Motor neuron (in vitro differentiated cells): ENCODE measurements at regions of chr13 and their contacts with region 1.

Region 1: GRCh38 chr13:24220086-24220703 is 59.7 kb downstream of the SPATA13 start:
- ATAC-seq: peak; percentile 65 to 92 (median 79)
- H3K4me3 ChIP-seq: no peak overlapping the region
- H3K27ac ChIP-seq: no peak overlapping the region
- H3K4me1 ChIP-seq: peaks cover 15 to 25% of the 10 kb centered on the region in 2 donors

Region 2: DNA sequence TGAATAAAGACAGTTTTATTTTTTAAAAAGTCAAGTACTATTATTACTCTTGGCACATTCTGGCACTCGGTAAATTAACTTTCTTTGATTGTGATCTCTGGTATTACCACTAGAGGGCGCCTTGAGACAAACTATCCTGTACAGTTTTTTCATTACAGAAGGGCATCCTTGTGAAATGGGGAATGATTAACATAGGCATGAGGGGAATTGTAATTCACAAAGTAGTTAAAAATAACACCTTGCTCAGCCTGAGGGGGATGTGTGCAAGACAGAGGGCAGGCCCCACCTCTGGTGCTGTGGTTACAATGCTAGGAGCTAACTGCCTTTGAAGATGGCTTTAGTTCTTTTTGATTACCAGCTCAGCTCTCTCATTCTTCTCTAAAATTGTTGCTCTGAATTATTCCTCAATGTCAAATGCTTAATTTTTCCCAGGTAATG is 298.7 kb before region 1 on chr13:
- in situ Hi-C with region 1: loop called in 2 of 9 experiments (anchors 25 kb)
- ATAC-seq: peak in 7 of 8 experiments; percentile 32 to 98 (median 66)
- H3K4me3 ChIP-seq: no peak overlapping the region
- H3K27ac ChIP-seq: no peak overlapping the region
- H3K4me1 ChIP-seq: no peaks in the 10 kb centered on the region

Region 3: DNA sequence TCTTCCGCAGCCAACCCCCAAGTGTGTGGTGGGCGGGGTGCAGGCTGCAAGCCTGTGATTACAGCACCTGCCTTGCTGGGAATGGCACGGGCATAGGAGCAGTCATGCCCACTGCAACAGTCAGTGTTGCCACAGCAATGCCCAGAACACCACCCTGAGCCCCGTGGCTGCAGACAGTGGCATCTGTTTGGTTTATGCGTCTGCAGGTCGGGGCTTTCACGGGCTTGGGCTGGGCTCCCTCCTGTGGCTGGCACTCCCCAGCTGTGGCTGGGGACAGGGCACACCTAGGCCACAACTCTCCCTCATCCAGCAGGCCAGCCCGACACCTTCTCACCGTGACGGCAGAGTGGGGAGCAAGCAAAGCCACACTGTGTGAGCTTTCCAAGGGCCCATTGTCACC is 207.5 kb before region 1 on chr13:
- in situ Hi-C with region 1: loop called in 3 of 9 experiments (anchors 10 to 25 kb)
- ATAC-seq: peak in 1 of 8 experiments; percentile 55
- H3K4me3 ChIP-seq: no peak overlapping the region
- H3K27ac ChIP-seq: no peak overlapping the region
- H3K4me1 ChIP-seq: no peaks in the 10 kb centered on the region

Region 4: DNA sequence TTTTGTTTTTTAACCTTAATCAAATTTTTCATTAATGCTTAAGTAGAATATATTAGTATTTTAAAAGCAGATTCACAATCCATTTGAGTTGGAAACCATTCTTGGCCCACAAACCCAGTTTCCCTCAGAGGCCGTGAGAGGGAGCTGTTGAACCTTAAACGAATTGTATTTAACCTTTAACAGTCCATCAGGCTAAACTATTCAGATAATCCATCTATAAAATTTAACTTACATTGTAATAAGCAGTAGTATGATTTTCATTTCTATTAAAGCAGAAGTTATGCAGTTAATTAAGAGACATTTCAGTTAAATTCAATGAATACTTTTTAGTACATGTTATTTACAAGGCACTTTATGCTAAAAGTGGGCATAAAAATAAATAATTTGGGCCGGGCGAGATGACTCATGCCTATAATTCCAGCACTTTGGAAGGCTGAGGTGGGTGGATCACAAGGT is 199.8 kb before region 1 on chr13:
- in situ Hi-C with region 1: loop called in 7 of 9 experiments (anchors 10 to 25 kb)
- ATAC-seq: peak in 4 of 8 experiments; percentile 61 to 79 (median 70)
- H3K4me3 ChIP-seq: no peak overlapping the region
- H3K27ac ChIP-seq: no peak overlapping the region
- H3K4me1 ChIP-seq: no peaks in the 10 kb centered on the region

Region 5: GRCh38 chr13:24038841-24039330 is 181.3 kb before region 1 on chr13:
- in situ Hi-C with region 1: loop called in 3 of 9 experiments (anchors 25 kb)
- ATAC-seq: peak in 5 of 8 experiments; percentile 88 to 93 (median 91)
- H3K4me3 ChIP-seq: no peak overlapping the region
- H3K27ac ChIP-seq: peak overlapping the region; percentile 22 to 53
- H3K4me1 ChIP-seq: peaks cover 29 to 59% of the 10 kb centered on the region in 2 donors

Region 6: GRCh38 chr13:24053519-24054251 is 166.5 kb before region 1 on chr13:
- in situ Hi-C with region 1: loop called in 4 of 9 experiments (anchors 25 kb)
- ATAC-seq: peak; percentile 74 to 97 (median 95)
- H3K4me3 ChIP-seq: no peak overlapping the region
- H3K27ac ChIP-seq: no peak overlapping the region
- H3K4me1 ChIP-seq: peaks cover 4% of the 10 kb centered on the region in 2 donors